ENCODE measurements at regions of chr20 and their contacts with region 1.

Region 1: GRCh38 chr20:2651772-2652723 is at the start of gene NOP56:
- DNase-seq: peak; percentile 85 to 98 (median 95)
- ATAC-seq: peak; percentile 86
- H3K4me3 ChIP-seq: peak within 1 kb of the TSS; percentile 81
- H3K4me3 Mint-ChIP-seq: peak within 1 kb of the TSS; percentile 95
- H3K27ac ChIP-seq: peak within 1 kb of the TSS; percentile 66 to 83
- H3K27ac Mint-ChIP-seq: peak within 1 kb of the TSS; percentile 94
- H3K4me1 ChIP-seq: peaks cover 48% of the 10 kb centered on the region
- H3K4me1 Mint-ChIP-seq: peaks cover 59% of the 10 kb centered on the region
- H3K27me3 ChIP-seq: no peaks in the 10 kb centered on the region
- H3K27me3 Mint-ChIP-seq: no peaks in the 10 kb centered on the region
- CTCF ChIP-seq: no peak
- total RNA-seq, gene NOP56: 261 to 262 TPM

Region 2: GRCh38 chr20:2523919-2524708 is 127.9 kb before region 1 on chr20:
- CTCF ChIA-PET with region 1: interaction called, 8 read pairs
- POLR2A ChIA-PET with region 1: interaction called, 14 read pairs
- intact Hi-C with region 1: loop called (anchors 5 kb)
- DNase-seq: peak; percentile 84 to 96 (median 91)
- ATAC-seq: peak; percentile 82
- H3K4me3 ChIP-seq: peak overlapping the region; percentile 94
- H3K4me3 Mint-ChIP-seq: peak overlapping the region; percentile 91
- H3K27ac ChIP-seq: peak overlapping the region; percentile 7 to 23
- H3K27ac Mint-ChIP-seq: peak overlapping the region; percentile 37
- H3K4me1 ChIP-seq: peaks cover 19% of the 10 kb centered on the region
- H3K4me1 Mint-ChIP-seq: peaks cover 15% of the 10 kb centered on the region
- H3K27me3 ChIP-seq: no peaks in the 10 kb centered on the region
- H3K27me3 Mint-ChIP-seq: no peaks in the 10 kb centered on the region
- CTCF ChIP-seq: peak; percentile 98

Region 3: DNA sequence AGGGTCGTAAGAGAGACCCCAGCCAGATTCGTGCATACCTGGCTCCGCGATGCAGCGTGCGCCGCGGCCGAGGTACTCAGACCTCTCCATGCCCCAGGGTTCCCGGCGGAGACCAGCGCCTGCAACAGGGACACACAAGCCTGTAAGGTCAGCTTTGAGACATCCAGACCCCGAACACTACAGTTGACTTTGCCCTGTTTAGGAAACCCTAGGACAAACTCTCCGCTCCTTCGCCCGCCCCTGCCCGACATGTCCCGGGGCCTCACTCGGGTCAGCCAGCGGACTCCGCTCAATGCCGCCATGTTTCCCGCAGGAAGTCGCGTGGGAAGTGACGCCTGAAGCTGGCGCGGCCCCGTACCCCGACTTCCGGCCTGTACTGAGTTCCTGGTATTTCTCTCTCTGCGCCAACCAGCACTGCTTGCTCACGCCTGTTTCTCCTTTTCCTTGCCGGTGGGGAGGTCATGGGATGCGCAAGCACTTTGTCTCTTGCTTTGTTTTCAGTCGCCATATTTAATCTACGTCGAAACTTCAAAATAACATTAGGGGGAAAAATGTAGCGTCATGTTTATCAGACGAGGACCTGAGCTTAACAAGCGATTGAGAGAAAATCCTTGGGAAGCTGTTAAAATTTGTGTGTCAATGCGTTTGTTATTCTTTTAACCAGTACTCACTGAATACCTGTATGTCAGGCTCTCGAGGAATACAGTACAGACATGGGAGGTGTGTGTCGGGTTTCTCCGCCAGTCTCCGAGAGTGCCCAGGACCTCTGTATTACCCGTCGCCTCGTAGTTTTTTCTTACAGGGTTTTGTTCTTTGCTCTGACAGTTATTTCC is 12.1 kb after region 1 on chr20 and contains the start of gene IDH3B:
- CTCF ChIA-PET with region 1: interaction called, 8 read pairs
- POLR2A ChIA-PET with region 1: interaction called, 124 read pairs
- intact Hi-C with region 1: loop called (anchors 1 kb)
- DNase-seq: peak; percentile 83 to 96 (median 89)
- ATAC-seq: peak; percentile 99
- H3K4me3 ChIP-seq: peak within 1 kb of the TSS; percentile 90
- H3K4me3 Mint-ChIP-seq: peak within 1 kb of the TSS; percentile 94
- H3K27ac ChIP-seq: peak within 1 kb of the TSS; percentile 77 to 96
- H3K27ac Mint-ChIP-seq: peak within 1 kb of the TSS; percentile 91
- H3K4me1 ChIP-seq: peaks cover 18% of the 10 kb centered on the region
- H3K4me1 Mint-ChIP-seq: peaks cover 28% of the 10 kb centered on the region
- H3K27me3 ChIP-seq: no peaks in the 10 kb centered on the region
- H3K27me3 Mint-ChIP-seq: no peaks in the 10 kb centered on the region
- CTCF ChIP-seq: no peak
- total RNA-seq, gene IDH3B: 171 to 181 TPM

Region 4: GRCh38 chr20:2742934-2743559 is 91.0 kb after region 1 on chr20:
- CTCF ChIA-PET with region 1: no interaction called
- POLR2A ChIA-PET with region 1: interaction called, 24 read pairs
- intact Hi-C with region 1: no loop called
- DNase-seq: peak; percentile 60 to 88 (median 70)
- ATAC-seq: peak; percentile 54
- H3K4me3 ChIP-seq: no peak overlapping the region
- H3K4me3 Mint-ChIP-seq: peak overlapping the region; percentile 59
- H3K27ac ChIP-seq: peak overlapping the region in 1 of 2 donors; percentile 60
- H3K27ac Mint-ChIP-seq: peak overlapping the region; percentile 90
- H3K4me1 ChIP-seq: peaks cover 47% of the 10 kb centered on the region
- H3K4me1 Mint-ChIP-seq: peaks cover 51% of the 10 kb centered on the region
- H3K27me3 ChIP-seq: no peaks in the 10 kb centered on the region
- H3K27me3 Mint-ChIP-seq: no peaks in the 10 kb centered on the region
- CTCF ChIP-seq: peak; percentile 90

Region 5: GRCh38 chr20:2859330-2860121 is 207.5 kb after region 1 on chr20:
- CTCF ChIA-PET with region 1: no interaction called
- POLR2A ChIA-PET with region 1: no interaction called
- intact Hi-C with region 1: no loop called
- DNase-seq: no peak
- ATAC-seq: no peak
- H3K4me3 ChIP-seq: no peak overlapping the region
- H3K4me3 Mint-ChIP-seq: no peak overlapping the region
- H3K27ac ChIP-seq: no peak overlapping the region
- H3K27ac Mint-ChIP-seq: no peak overlapping the region
- H3K4me1 ChIP-seq: no peaks in the 10 kb centered on the region
- H3K4me1 Mint-ChIP-seq: no peaks in the 10 kb centered on the region
- H3K27me3 ChIP-seq: no peaks in the 10 kb centered on the region
- H3K27me3 Mint-ChIP-seq: no peaks in the 10 kb centered on the region
- CTCF ChIP-seq: no peak

Region 6: DNA sequence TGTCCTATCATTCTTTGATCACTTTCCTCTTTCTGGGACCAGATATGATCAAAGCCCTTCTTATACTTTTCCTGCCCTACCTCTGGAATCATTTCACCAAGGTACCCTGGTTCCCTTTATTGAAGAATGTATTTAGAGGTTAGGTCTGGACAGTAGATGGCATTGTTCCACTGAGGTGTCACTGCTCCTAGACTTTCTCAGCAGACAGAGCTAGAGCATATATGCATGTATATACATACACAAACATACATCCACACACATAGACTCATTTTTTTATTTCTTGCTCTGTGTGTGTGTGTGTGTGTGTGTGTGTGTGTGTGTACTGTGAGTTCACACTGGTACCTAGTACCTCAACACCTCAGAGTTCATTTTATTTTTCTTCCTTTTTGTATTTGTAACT is 262.1 kb after region 1 on chr20:
- CTCF ChIA-PET with region 1: no interaction called
- POLR2A ChIA-PET with region 1: no interaction called
- intact Hi-C with region 1: no loop called
- DNase-seq: no peak
- ATAC-seq: no peak
- H3K4me3 ChIP-seq: no peak overlapping the region
- H3K4me3 Mint-ChIP-seq: no peak overlapping the region
- H3K27ac ChIP-seq: no peak overlapping the region
- H3K27ac Mint-ChIP-seq: no peak overlapping the region
- H3K4me1 ChIP-seq: peaks cover 4% of the 10 kb centered on the region
- H3K4me1 Mint-ChIP-seq: peaks cover 22% of the 10 kb centered on the region
- H3K27me3 ChIP-seq: no peaks in the 10 kb centered on the region
- H3K27me3 Mint-ChIP-seq: no peaks in the 10 kb centered on the region
- CTCF ChIP-seq: no peak

Region 7: GRCh38 chr20:3407771-3408637 is 756.0 kb after region 1 on chr20:
- CTCF ChIA-PET with region 1: no interaction called
- POLR2A ChIA-PET with region 1: interaction called, 3 read pairs
- intact Hi-C with region 1: loop called in 1 of 2 experiments (anchors 5 kb)
- DNase-seq: peak; percentile 51 to 89 (median 64)
- ATAC-seq: peak; percentile 64
- H3K4me3 ChIP-seq: peak overlapping the region; percentile 99
- H3K4me3 Mint-ChIP-seq: peak overlapping the region; percentile 99
- H3K27ac ChIP-seq: peak overlapping the region; percentile 65 to 73
- H3K27ac Mint-ChIP-seq: peak overlapping the region; percentile 92
- H3K4me1 ChIP-seq: peaks cover 24% of the 10 kb centered on the region
- H3K4me1 Mint-ChIP-seq: peaks cover 32% of the 10 kb centered on the region
- H3K27me3 ChIP-seq: peaks cover 0 to 1% of the 10 kb centered on the region in 2 experiments
- H3K27me3 Mint-ChIP-seq: no peaks in the 10 kb centered on the region
- CTCF ChIP-seq: no peak

Measured in CD4-positive, alpha-beta T cell (primary cell).